ENCODE measurements at regions of chr11 and their contacts with region 1.

Region 1: GRCh38 chr11:57800444-57801182 is 39.0 kb downstream of the CTNND1 start:
- DNase-seq: peak; percentile 92
- H3K4me3 ChIP-seq: no peak overlapping the region
- H3K27ac ChIP-seq: peak overlapping the region; percentile 41
- H3K4me1 ChIP-seq: peaks cover 17% of the 10 kb centered on the region
- H3K27me3 ChIP-seq: no peaks in the 10 kb centered on the region
- CTCF ChIP-seq: peak; percentile 92

Region 2: DNA sequence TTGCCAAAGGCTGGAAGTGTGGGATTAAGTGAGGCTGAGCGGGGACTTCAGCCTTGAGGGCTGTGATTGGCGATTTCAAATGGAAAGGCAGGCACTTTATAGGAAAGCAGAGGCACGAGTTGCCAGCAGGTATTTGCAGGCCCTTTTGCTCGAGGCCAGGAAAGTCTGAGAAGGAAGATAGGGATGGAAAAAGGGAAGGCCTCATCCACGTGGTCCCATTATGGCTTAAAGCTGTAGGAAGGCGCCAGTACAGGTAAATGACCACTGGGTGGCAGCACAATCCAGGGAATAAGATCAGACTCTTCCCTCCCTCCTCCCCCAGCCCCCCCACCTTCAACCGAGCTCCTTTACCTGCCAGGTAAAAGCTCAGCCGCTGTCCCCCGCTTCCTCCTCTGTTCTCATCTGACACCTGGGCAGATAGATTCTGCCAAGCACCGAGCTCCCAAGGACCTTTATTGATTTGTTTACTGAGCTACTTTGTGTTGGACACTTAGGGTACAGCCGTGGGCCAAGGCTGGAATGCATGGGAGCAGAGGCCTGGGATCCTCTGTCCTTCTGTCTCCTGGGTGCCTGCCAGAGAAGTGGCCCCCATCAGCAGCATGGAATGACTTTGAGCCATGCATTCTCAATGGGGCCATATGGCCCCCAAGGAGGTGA is 454.9 kb before region 1 on chr11:
- CTCF ChIA-PET with region 1: interaction called, 10 read pairs
- POLR2A ChIA-PET with region 1: no interaction called
- intact Hi-C with region 1: no loop called
- DNase-seq: peak; percentile 82
- H3K4me3 ChIP-seq: no peak overlapping the region
- H3K27ac ChIP-seq: no peak overlapping the region
- H3K4me1 ChIP-seq: no peaks in the 10 kb centered on the region
- H3K27me3 ChIP-seq: no peaks in the 10 kb centered on the region
- CTCF ChIP-seq: peak; percentile 84

Region 3: DNA sequence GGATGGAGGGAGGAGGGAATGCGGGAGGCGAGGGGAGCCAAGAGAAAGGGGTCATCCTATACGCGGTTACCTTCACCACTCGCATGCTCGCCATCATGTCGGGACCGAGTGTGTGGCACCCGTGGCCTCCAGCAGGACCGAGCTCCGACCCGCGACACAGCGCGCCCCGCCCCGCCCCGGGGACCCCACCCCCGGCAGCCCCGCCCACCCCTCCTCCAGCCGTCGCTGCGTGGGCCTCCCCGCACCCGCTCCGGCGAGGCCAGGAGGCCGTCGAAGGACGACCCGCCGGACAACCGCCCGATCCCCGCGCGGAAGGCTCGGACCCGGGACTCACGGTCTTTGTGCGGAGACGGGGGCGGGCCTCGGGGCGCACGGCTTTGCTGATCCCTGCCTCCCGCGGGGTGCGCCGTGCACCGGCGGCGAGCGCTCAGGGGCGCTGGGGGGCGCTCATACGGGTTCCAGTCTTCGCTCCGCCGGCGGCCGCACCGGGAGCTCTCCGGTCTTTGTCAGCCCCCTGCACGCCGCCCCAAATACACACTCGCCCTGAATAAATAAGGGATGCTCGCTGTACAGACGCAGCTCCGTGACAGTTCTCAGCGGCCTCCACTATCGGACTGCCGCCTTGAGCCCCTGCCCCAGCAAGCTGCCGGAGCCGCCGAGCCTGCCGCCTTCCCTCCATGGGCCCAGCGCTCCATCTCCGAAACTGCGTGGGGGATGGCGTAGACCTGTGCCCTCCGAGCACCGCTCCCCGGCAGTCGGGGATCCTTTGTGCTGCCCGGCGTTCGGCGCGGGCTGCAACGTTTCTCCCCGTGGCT is 232.9 kb before region 1 on chr11 and contains the start of gene UBE2L6:
- CTCF ChIA-PET with region 1: interaction called, 5 read pairs
- POLR2A ChIA-PET with region 1: no interaction called
- intact Hi-C with region 1: loop called (anchors 5 kb)
- DNase-seq: peak; percentile 68
- H3K4me3 ChIP-seq: peak within 1 kb of the TSS; percentile 68
- H3K27ac ChIP-seq: peak within 1 kb of the TSS; percentile 68
- H3K4me1 ChIP-seq: no peaks in the 10 kb centered on the region
- H3K27me3 ChIP-seq: no peaks in the 10 kb centered on the region
- CTCF ChIP-seq: peak; percentile 98
- total RNA-seq, gene UBE2L6: 30.4 and 38.8 TPM in 2 replicates

Region 4: GRCh38 chr11:57761301-57762234 is 39.0 kb before region 1 on chr11 and contains the start of gene CTNND1:
- CTCF ChIA-PET with region 1: interaction called, 30 read pairs
- POLR2A ChIA-PET with region 1: no interaction called
- intact Hi-C with region 1: loop called (anchors 2 kb)
- DNase-seq: peak; percentile 99
- H3K4me3 ChIP-seq: peak within 1 kb of the TSS; percentile 84
- H3K27ac ChIP-seq: peak within 1 kb of the TSS; percentile 98
- H3K4me1 ChIP-seq: peaks cover 20% of the 10 kb centered on the region
- H3K27me3 ChIP-seq: no peaks in the 10 kb centered on the region
- CTCF ChIP-seq: no peak
- total RNA-seq, gene CTNND1: 133 and 174 TPM in 2 replicates

Region 5: DNA sequence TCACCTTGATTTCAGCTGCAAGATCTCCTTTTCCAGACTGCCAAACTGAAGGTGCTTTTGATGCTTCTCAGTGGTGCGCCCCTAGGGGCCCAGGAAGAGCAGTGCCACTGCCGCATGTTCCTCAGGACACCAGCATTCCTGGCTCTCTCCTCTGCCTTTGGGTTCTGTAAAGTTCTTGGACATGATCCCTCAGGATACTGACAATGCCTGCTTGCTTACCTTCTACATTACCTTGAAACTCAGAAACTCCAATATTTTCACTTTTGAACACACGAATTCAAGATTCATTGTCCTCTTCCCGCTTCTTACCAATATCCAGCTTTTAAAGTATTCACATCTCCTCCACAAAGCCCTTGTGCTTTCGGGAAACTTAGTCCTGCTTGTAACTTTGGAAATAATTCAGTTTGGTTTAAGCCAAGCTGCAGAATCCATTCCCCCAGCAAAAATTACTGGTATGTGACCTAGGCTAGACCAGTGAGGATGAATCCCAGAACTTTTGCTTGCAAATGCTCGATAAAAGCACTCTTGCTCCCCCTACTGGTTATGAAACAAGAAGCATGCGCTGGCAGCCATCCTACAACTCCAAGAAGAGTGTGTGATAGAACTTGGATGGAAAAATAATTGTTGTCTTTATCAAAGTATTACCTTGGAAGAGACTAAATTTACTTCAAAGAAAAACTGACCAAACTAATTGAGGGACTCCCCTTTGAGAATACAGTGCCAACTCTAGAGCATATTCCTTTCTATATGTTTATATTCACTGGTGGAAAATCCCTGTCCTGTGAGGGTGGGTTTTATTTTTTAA is 723.8 kb after region 1 on chr11:
- CTCF ChIA-PET with region 1: no interaction called
- POLR2A ChIA-PET with region 1: no interaction called
- intact Hi-C with region 1: loop called (anchors 10 kb)
- DNase-seq: peak; percentile 88
- H3K4me3 ChIP-seq: peak overlapping the region; percentile 15
- H3K27ac ChIP-seq: no peak overlapping the region
- H3K4me1 ChIP-seq: no peaks in the 10 kb centered on the region
- H3K27me3 ChIP-seq: peaks cover 8% of the 10 kb centered on the region
- CTCF ChIP-seq: peak; percentile 72